ENCODE measurements at regions of chr2 and their contacts with region 1.

Region 1: GRCh38 chr2:237026981-237027711 is 58.5 kb upstream of the COPS8 start:
- DNase-seq: peak in 1 of 2 donors; percentile 66
- ATAC-seq: peak in 2 of 3 donors; percentile 43 to 59
- H3K4me3 ChIP-seq: no peak overlapping the region
- H3K4me3 Mint-ChIP-seq: no peak overlapping the region
- H3K27ac ChIP-seq: no peak overlapping the region
- H3K27ac Mint-ChIP-seq: no peak overlapping the region
- H3K4me1 ChIP-seq: no peaks in the 10 kb centered on the region
- H3K4me1 Mint-ChIP-seq: no peaks in the 10 kb centered on the region
- H3K27me3 ChIP-seq: no peaks in the 10 kb centered on the region
- H3K27me3 Mint-ChIP-seq: peaks cover 0 to 2% of the 10 kb centered on the region in 2 donors
- CTCF ChIP-seq: peak; percentile 35

Region 2: GRCh38 chr2:236352761-236353593 is 674.2 kb before region 1 on chr2:
- intact Hi-C with region 1: loop called (anchors 2 kb)
- DNase-seq: peak in 1 of 2 donors; percentile 70
- ATAC-seq: peak in 2 of 3 donors; percentile 63 to 64
- H3K4me3 ChIP-seq: no peak overlapping the region
- H3K4me3 Mint-ChIP-seq: no peak overlapping the region
- H3K27ac ChIP-seq: no peak overlapping the region
- H3K27ac Mint-ChIP-seq: no peak overlapping the region
- H3K4me1 ChIP-seq: no peaks in the 10 kb centered on the region
- H3K4me1 Mint-ChIP-seq: peaks cover 6 to 7% of the 10 kb centered on the region in 2 donors
- H3K27me3 ChIP-seq: peaks cover 2% of the 10 kb centered on the region
- H3K27me3 Mint-ChIP-seq: peaks cover 13 to 21% of the 10 kb centered on the region in 2 donors
- CTCF ChIP-seq: peak; percentile 92